ENCODE measurements at regions of chr13 and their contacts with region 1.

Region 1: GRCh38 chr13:45718063-45718462 is 15.9 kb downstream of the CBY2 start:
- DNase-seq: peak; percentile 8
- ATAC-seq: peak; percentile 78
- H3K4me3 ChIP-seq: no peak overlapping the region
- H3K27ac ChIP-seq: no peak overlapping the region
- H3K4me1 ChIP-seq: no peaks in the 10 kb centered on the region
- H3K27me3 ChIP-seq: peaks cover 25% of the 10 kb centered on the region
- CTCF ChIP-seq: peak; percentile 46 to 76 (median 65); a peak in 5 of 6 replicates
- POLR2A ChIP-seq: no peak
- RAD21 ChIP-seq: peak; percentile 58

Region 2: GRCh38 chr13:45332036-45332830 is 385.8 kb before region 1 on chr13:
- CTCF ChIA-PET with region 1: no interaction called
- POLR2A ChIA-PET with region 1: no interaction called
- RAD21 ChIA-PET with region 1: no interaction called
- intact Hi-C with region 1: no loop called
- DNase-seq: peak; percentile 85
- ATAC-seq: peak; percentile 74
- H3K4me3 ChIP-seq: peak overlapping the region in 1 of 2 experiments; percentile 0; a peak in 1 of 4 replicates
- H3K27ac ChIP-seq: peak overlapping the region; percentile 78
- H3K4me1 ChIP-seq: peaks cover 51 to 82% of the 10 kb centered on the region in 2 experiments
- H3K27me3 ChIP-seq: no peaks in the 10 kb centered on the region
- CTCF ChIP-seq: no peak
- POLR2A ChIP-seq: no peak
- RAD21 ChIP-seq: no peak

Region 3: GRCh38 chr13:45511310-45512097 is 206.6 kb before region 1 on chr13:
- CTCF ChIA-PET with region 1: no interaction called
- POLR2A ChIA-PET with region 1: no interaction called
- RAD21 ChIA-PET with region 1: no interaction called
- intact Hi-C with region 1: loop called (anchors 5 kb)
- DNase-seq: peak; percentile 43
- ATAC-seq: peak; percentile 81
- H3K4me3 ChIP-seq: no peak overlapping the region
- H3K27ac ChIP-seq: no peak overlapping the region
- H3K4me1 ChIP-seq: no peaks in the 10 kb centered on the region
- H3K27me3 ChIP-seq: no peaks in the 10 kb centered on the region
- CTCF ChIP-seq: peak; percentile 39 to 90 (median 78); a peak in 5 of 6 replicates
- POLR2A ChIP-seq: no peak
- RAD21 ChIP-seq: peak; percentile 54